ENCODE measurements at regions of chr2 and their contacts with region 1.

Region 1: GRCh38 chr2:134411828-134412638 is 158.2 kb downstream of the MGAT5 start:
- DNase-seq: peak; percentile 85
- H3K4me3 ChIP-seq: no peak overlapping the region
- H3K27ac ChIP-seq: peak overlapping the region in 2 of 4 donors; percentile 5 to 30
- H3K4me1 ChIP-seq: peaks cover 0 to 28% (median 11%) of the 10 kb centered on the region in 4 donors
- H3K27me3 ChIP-seq: no peaks in the 10 kb centered on the region
- CTCF ChIP-seq: peak; percentile 30 to 67 (median 60)
- EP300 ChIP-seq: no peak
- POLR2A ChIP-seq: no peak

Region 2: DNA sequence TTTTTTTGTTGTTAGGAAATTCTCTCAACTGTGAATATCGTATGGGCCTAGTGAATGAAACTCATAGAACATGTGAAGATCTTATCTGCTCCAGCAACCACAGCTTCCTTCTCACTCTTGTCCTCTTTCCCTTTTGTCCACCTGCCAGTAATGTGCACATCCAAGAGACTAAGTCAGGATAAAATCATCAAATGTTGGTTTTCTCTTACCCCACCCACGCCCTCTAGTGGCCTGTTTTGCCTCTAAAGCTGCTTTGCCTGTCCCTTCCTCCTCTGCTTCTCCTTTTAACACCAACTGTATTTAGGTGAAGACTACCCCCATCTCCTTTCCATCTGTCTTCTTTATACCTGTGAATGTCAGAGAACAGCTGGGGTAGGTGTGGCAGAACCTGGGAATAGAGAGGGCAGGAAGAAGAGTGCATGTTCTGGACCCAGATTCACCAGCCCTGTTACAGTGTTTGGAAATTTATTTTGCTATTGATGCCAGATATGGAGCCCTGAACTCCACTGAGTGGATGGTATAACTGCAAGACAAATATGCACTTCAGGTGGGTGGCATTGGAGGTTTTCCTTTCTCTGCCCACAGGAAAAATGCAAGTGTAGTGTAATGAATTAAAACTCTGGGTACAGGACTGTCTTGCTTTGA is 166.6 kb before region 1 on chr2:
- intact Hi-C with region 1: loop called (anchors 2 kb)
- DNase-seq: peak; percentile 82
- H3K4me3 ChIP-seq: no peak overlapping the region
- H3K27ac ChIP-seq: no peak overlapping the region
- H3K4me1 ChIP-seq: peaks cover 0 to 21% (median 9%) of the 10 kb centered on the region in 4 donors
- H3K27me3 ChIP-seq: no peaks in the 10 kb centered on the region
- CTCF ChIP-seq: peak; percentile 46 to 71 (median 58)
- EP300 ChIP-seq: no peak
- POLR2A ChIP-seq: no peak

Region 3: GRCh38 chr2:134375935-134376334 is 36.1 kb before region 1 on chr2:
- intact Hi-C with region 1: loop called (anchors 1 kb)
- DNase-seq: peak; percentile 85
- H3K4me3 ChIP-seq: no peak overlapping the region
- H3K27ac ChIP-seq: peak overlapping the region; percentile 63 to 81 (median 74)
- H3K4me1 ChIP-seq: peaks cover 0 to 55% (median 40%) of the 10 kb centered on the region in 4 donors
- H3K27me3 ChIP-seq: no peaks in the 10 kb centered on the region
- CTCF ChIP-seq: peak in 3 of 4 experiments; percentile 24 to 34 (median 25)
- EP300 ChIP-seq: no peak
- POLR2A ChIP-seq: no peak